ENCODE measurements at regions of chr3 and their contacts with region 1.

Region 1: GRCh38 chr3:36729204-36730056 is 34.9 kb downstream of the DCLK3 start:
- DNase-seq: no peak
- ATAC-seq: no peak
- H3K4me3 Mint-ChIP-seq: no peak overlapping the region
- H3K27ac Mint-ChIP-seq: no peak overlapping the region
- H3K4me1 Mint-ChIP-seq: no peaks in the 10 kb centered on the region
- H3K27me3 Mint-ChIP-seq: peaks cover 6% of the 10 kb centered on the region
- CTCF ChIP-seq: no peak

Region 2: GRCh38 chr3:36557021-36557707 is 172.3 kb before region 1 on chr3:
- CTCF ChIA-PET with region 1: no interaction called
- POLR2A ChIA-PET with region 1: no interaction called
- intact Hi-C with region 1: no loop called
- DNase-seq: no peak
- ATAC-seq: peak; percentile 61
- H3K4me3 Mint-ChIP-seq: no peak overlapping the region
- H3K27ac Mint-ChIP-seq: no peak overlapping the region
- H3K4me1 Mint-ChIP-seq: peaks cover 16% of the 10 kb centered on the region
- H3K27me3 Mint-ChIP-seq: no peaks in the 10 kb centered on the region
- CTCF ChIP-seq: no peak

Region 3: GRCh38 chr3:37024092-37024491 is 294.7 kb after region 1 on chr3:
- CTCF ChIA-PET with region 1: no interaction called
- POLR2A ChIA-PET with region 1: no interaction called
- intact Hi-C with region 1: loop called (anchors 1 kb)
- DNase-seq: no peak
- ATAC-seq: peak; percentile 42
- H3K4me3 Mint-ChIP-seq: no peak overlapping the region
- H3K27ac Mint-ChIP-seq: no peak overlapping the region
- H3K4me1 Mint-ChIP-seq: peaks cover 7% of the 10 kb centered on the region
- H3K27me3 Mint-ChIP-seq: no peaks in the 10 kb centered on the region
- CTCF ChIP-seq: no peak

Region 4: DNA sequence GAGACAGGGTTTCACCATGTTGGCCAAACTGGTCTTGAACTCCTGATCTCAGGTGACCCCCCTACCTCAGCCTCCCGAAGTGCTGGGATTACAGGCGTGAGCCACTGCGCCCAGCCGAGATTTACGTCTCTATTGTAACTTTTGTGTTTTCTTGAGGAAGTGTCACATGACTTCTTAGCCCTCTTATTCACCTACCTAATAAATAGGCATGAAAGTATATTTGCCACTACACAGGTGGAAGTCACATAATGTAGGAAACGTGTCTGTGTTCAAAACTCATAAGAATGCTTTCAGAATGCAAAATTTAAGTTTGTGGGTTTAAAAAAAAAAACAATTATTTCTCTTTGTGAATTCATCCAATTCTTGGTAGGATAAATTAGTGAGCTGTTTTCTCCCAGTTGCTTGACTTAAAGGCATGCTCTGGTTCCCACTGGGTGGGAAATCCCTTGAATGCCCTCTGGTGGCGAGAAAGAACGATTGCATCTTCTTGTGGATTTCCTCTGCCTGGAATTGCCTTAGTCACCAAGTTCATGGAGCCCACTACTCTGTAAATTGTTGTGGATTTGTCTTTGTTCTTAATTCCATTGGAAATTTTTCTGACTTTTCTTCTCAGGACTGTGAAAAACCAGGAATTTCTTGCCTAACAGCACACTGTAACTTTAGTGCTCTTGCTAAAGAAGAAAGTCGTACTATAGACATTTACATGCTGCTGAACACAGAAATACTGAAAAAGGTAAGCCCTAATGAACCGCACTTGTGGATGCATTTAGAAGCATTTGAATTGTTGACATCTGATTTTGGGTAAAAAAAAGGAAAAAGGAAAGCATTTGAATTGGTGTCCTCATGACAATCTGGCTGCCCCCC is 1050.1 kb after region 1 on chr3:
- CTCF ChIA-PET with region 1: no interaction called
- POLR2A ChIA-PET with region 1: no interaction called
- intact Hi-C with region 1: loop called (anchors 2 kb)
- DNase-seq: no peak
- ATAC-seq: no peak
- H3K4me3 Mint-ChIP-seq: no peak overlapping the region
- H3K27ac Mint-ChIP-seq: no peak overlapping the region
- H3K4me1 Mint-ChIP-seq: no peaks in the 10 kb centered on the region
- H3K27me3 Mint-ChIP-seq: no peaks in the 10 kb centered on the region
- CTCF ChIP-seq: peak; percentile 19

Measured in activated B cell treated with CpG ODN at 0.5 μM for 24 hours (primary cell).